Activated CD4-positive, alpha-beta T cell treated with anti-CD3 and anti-CD28 coated beads, Interleukin-2, amount 10 ng/mL, durations not matched to agents 24 days and 14 days (primary cell): ENCODE measurements at regions of chr14 and their contacts with region 1.

Region 1: GRCh38 chr14:22556990-22557623 is 31.9 kb downstream of the DAD1 start:
- DNase-seq: peak; percentile 97
- H3K4me3 Mint-ChIP-seq: peak overlapping the region; percentile 90
- H3K27ac Mint-ChIP-seq: peak overlapping the region; percentile 97
- H3K4me1 Mint-ChIP-seq: peaks cover 86% of the 10 kb centered on the region
- H3K27me3 Mint-ChIP-seq: peaks cover 4% of the 10 kb centered on the region

Region 2: GRCh38 chr14:21846227-21846885 is 710.8 kb before region 1 on chr14:
- intact Hi-C with region 1: loop called (anchors 5 kb)
- DNase-seq: peak; percentile 92
- H3K4me3 Mint-ChIP-seq: peak overlapping the region; percentile 80
- H3K27ac Mint-ChIP-seq: peak overlapping the region; percentile 91
- H3K4me1 Mint-ChIP-seq: peaks cover 18% of the 10 kb centered on the region
- H3K27me3 Mint-ChIP-seq: peaks cover 41% of the 10 kb centered on the region

Region 3: GRCh38 chr14:21997300-21997699 is 559.8 kb before region 1 on chr14:
- intact Hi-C with region 1: loop called (anchors 2 kb)
- DNase-seq: peak; percentile 82
- H3K4me3 Mint-ChIP-seq: peak overlapping the region; percentile 95
- H3K27ac Mint-ChIP-seq: peak overlapping the region; percentile 97
- H3K4me1 Mint-ChIP-seq: peaks cover 12% of the 10 kb centered on the region
- H3K27me3 Mint-ChIP-seq: no peaks in the 10 kb centered on the region

Region 4: GRCh38 chr14:22314181-22314820 is 242.8 kb before region 1 on chr14:
- intact Hi-C with region 1: loop called (anchors 10 kb)
- DNase-seq: peak; percentile 60
- H3K4me3 Mint-ChIP-seq: peak overlapping the region; percentile 69
- H3K27ac Mint-ChIP-seq: peak overlapping the region; percentile 85
- H3K4me1 Mint-ChIP-seq: no peaks in the 10 kb centered on the region
- H3K27me3 Mint-ChIP-seq: no peaks in the 10 kb centered on the region

Region 5: GRCh38 chr14:22472935-22473854 is 83.9 kb before region 1 on chr14:
- intact Hi-C with region 1: no loop called
- DNase-seq: no peak
- H3K4me3 Mint-ChIP-seq: no peak overlapping the region
- H3K27ac Mint-ChIP-seq: no peak overlapping the region
- H3K4me1 Mint-ChIP-seq: no peaks in the 10 kb centered on the region
- H3K27me3 Mint-ChIP-seq: no peaks in the 10 kb centered on the region

Region 6: GRCh38 chr14:22570132-22570949 is 13.2 kb after region 1 on chr14:
- intact Hi-C with region 1: loop called (anchors 1 kb)
- DNase-seq: peak; percentile 96
- H3K4me3 Mint-ChIP-seq: peak overlapping the region; percentile 92
- H3K27ac Mint-ChIP-seq: peak overlapping the region; percentile 95
- H3K4me1 Mint-ChIP-seq: peaks cover 59% of the 10 kb centered on the region
- H3K27me3 Mint-ChIP-seq: no peaks in the 10 kb centered on the region

Region 7: GRCh38 chr14:22852940-22853767 is 296.0 kb after region 1 on chr14:
- intact Hi-C with region 1: loop called (anchors 1 kb)
- DNase-seq: peak; percentile 97
- H3K4me3 Mint-ChIP-seq: peak overlapping the region; percentile 87
- H3K27ac Mint-ChIP-seq: peak overlapping the region; percentile 78
- H3K4me1 Mint-ChIP-seq: peaks cover 33% of the 10 kb centered on the region
- H3K27me3 Mint-ChIP-seq: peaks cover 10% of the 10 kb centered on the region